ENCODE measurements at regions of chr4 and their contacts with region 1.

Region 1: DNA sequence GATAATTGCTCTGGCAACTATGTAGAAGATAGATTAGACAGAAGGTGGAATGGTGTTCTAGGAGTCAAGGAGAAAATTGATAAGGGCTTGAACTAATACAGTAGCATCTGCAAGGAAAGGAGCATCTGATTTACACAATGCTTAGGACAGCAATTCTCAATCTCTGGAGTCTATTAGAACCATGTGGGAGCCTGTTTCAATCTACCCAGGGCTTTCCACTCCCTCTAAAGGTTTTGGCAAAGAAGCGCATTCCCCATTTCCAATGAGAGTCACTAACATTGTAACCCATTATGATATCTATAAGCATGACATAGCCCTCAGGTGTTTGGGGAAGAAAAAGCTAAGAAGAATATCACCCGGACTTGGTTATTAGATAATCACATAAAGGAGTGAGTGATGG is 168.2 kb downstream of the COL25A1 start:
- DNase-seq: no peak
- H3K27ac ChIP-seq: no peak overlapping the region
- CTCF ChIP-seq: no peak

Region 2: DNA sequence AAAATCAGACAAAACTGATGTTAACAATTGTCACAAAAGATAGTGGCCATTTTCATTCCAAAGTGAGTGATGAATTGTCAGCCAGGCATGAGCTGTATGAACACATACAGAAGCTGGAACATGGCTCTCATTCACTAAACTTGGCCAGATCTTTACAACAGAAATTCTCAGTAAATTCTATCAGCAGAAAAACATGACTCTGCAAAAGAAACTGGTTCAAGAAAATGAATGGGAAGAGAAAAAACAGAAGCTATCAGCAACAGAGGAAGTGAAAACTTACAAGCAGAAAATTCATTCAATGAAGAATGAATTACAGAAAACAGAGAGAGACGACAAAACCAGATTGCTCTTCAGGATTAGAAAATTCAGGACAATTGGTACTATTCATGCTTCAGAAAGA is 81.4 kb before region 1 on chr4:
- CTCF ChIA-PET with region 1: no interaction called
- POLR2A ChIA-PET with region 1: no interaction called
- DNase-seq: no peak
- H3K27ac ChIP-seq: no peak overlapping the region
- CTCF ChIP-seq: no peak

Region 3: GRCh38 chr4:109294006-109294405 is 159.7 kb after region 1 on chr4:
- CTCF ChIA-PET with region 1: interaction called, 11 read pairs
- POLR2A ChIA-PET with region 1: no interaction called
- DNase-seq: no peak
- H3K27ac ChIP-seq: no peak overlapping the region
- CTCF ChIP-seq: no peak